ENCODE measurements at regions of chr1 and their contacts with region 1.

Region 1: DNA sequence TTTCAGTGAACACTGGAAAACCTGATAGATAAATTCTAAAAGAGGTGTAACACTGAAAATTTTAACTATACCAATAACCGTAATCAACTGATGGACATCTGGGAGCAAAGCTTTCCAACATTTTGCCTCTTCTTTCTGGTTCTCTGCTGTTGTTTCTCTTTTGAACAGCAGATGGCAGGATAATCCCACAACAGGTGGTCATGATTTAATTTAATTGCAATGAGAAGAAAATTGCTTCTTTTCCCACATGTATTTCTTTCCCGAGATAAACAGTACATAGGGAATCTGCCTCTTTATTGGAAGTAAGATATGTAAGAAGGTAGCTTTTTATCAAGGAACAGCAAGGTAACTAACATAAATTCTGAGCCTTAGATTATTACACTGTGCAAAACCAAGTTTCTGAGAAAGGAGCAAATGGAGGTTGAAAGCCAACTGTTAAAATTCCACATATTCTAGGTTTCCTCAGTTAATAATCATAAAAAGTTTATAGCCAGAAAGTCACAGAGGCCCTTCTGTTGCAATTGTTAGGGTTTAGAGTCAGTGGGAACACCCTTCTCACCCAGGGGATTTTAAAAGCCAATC is 72.9 kb downstream of the RPS6KA1 start:
- DNase-seq: no peak
- ATAC-seq: peak; percentile 64
- H3K4me3 ChIP-seq: no peak overlapping the region
- H3K27ac ChIP-seq: no peak overlapping the region
- H3K4me1 ChIP-seq: peaks cover 10% of the 10 kb centered on the region
- H3K27me3 ChIP-seq: no peaks in the 10 kb centered on the region
- CTCF ChIP-seq: peak; percentile 77 to 86 (median 79)
- EP300 ChIP-seq: no peak
- POLR2A ChIP-seq: no peak
- RAD21 ChIP-seq: peak; percentile 99

Region 2: DNA sequence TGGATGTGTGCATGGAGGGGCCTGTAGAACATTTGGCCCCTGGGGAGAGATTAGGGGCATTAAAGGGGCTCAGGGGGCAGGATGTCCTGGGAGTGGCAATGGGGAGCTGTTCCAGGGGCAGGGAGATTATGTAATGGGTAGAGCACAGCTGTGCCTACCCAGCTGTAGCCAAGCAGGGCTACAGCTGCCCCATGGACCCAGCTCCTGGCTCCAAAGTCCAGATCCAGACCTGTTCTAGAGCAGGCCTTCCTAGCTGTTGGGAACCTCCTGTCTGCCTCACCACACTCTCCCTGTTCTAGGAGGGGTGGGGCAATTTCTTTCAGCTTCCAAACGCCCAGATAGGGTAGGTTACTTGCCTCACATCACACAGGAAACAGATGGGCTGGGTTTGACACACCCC is 67.3 kb before region 1 on chr1:
- CTCF ChIA-PET with region 1: interaction called, 58 read pairs
- POLR2A ChIA-PET with region 1: interaction called, 3 read pairs
- RAD21 ChIA-PET with region 1: interaction called, 27 read pairs
- SMC1A ChIA-PET with region 1: interaction called, 53 read pairs
- in situ Hi-C with region 1: no loop called
- intact Hi-C with region 1: loop called (anchors 5 kb)
- DNase-seq: no peak
- ATAC-seq: no peak
- H3K4me3 ChIP-seq: no peak overlapping the region
- H3K27ac ChIP-seq: no peak overlapping the region
- H3K4me1 ChIP-seq: peaks cover 39% of the 10 kb centered on the region
- H3K27me3 ChIP-seq: no peaks in the 10 kb centered on the region
- CTCF ChIP-seq: no peak
- EP300 ChIP-seq: no peak
- POLR2A ChIP-seq: no peak
- RAD21 ChIP-seq: no peak

Region 3: DNA sequence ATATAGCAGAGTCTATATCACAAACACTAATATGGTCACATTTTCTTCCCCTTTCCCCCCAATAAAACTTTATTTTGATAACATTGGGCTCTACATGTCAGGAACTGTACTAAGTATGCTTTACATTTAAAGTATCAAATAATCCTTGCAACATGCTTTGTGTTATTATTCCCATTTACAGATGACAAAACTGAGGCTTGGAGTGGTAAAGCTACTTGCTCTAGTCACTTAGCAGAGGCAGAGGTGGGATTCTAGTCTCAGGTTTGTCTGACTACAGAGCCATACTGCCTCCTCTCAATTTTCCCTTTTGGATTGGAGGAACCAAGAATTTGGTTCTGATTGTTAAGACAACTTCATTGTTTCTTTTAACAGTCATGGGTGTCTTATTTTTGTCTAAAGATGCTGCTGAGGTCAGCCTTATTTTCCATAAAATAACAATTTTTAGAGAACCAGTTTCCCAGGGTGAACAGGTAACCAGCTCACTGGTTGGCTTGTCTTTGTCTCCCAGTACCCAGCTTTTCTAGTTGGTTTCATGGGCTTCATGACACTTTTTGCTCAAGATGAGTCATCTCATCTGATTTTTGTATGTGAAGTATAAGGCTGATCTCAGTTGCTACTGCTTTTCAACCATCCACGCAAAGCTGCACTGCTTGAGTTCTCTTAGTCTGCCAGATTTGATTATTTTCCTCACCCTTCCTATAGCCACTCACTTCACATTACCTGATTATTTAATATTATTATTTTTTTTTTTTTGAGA is 12.4 kb after region 1 on chr1:
- CTCF ChIA-PET with region 1: interaction called, 5 read pairs
- POLR2A ChIA-PET with region 1: interaction called, 4 read pairs
- RAD21 ChIA-PET with region 1: interaction called, 24 read pairs
- SMC1A ChIA-PET with region 1: interaction called, 11 read pairs
- in situ Hi-C with region 1: no loop called
- intact Hi-C with region 1: no loop called
- DNase-seq: no peak
- ATAC-seq: peak; percentile 46; the same call in 2 of the 3 replicates
- H3K4me3 ChIP-seq: no peak overlapping the region
- H3K27ac ChIP-seq: no peak overlapping the region
- H3K4me1 ChIP-seq: peaks cover 13% of the 10 kb centered on the region
- H3K27me3 ChIP-seq: no peaks in the 10 kb centered on the region
- CTCF ChIP-seq: no peak
- EP300 ChIP-seq: no peak
- POLR2A ChIP-seq: no peak
- RAD21 ChIP-seq: no peak

Region 4: DNA sequence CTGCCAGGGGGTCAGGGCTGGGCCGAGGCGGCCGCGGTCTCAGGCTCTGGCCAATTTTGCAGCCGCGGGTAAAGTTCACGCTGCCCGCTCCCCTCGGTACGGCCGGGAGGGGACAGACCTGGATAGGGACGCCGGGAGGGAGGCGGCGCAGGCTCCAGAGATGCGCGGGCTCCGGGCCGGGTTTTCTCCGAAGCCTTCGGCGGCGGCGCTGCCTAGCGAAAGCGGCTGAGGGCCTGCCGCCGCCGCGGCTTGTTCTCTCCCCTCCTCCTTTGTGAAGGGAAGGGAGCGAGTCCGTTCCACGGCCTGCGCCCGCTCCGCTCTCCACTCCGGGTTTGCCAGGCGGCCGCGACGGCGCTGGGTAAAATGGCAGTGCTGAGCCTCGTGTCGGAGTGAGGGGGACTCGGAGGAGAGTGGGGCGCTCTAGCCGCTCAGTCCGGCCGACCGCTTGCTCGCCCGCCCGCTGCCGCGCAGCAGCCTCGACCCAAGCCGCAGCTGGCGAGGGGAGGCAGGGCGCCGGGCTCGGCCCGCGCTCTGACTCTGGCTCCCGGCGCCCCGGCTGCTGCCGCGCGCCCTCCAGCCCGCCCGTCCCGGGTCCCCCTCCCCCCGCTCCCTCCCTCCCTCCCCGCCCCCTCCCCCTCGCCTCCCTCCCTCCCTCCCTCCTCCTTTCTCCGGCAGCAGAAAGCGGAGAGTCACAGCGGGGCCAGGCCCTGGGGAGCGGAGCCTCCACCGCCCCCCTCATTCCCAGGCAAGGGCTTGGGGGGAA is 93.1 kb after region 1 on chr1 and contains the start of gene ARID1A:
- CTCF ChIA-PET with region 1: interaction called, 11 read pairs
- POLR2A ChIA-PET with region 1: interaction called, 3 read pairs
- RAD21 ChIA-PET with region 1: interaction called, 5 read pairs
- SMC1A ChIA-PET with region 1: interaction called, 24 read pairs
- in situ Hi-C with region 1: no loop called
- intact Hi-C with region 1: no loop called
- DNase-seq: peak; percentile 82
- ATAC-seq: peak; percentile 69
- H3K4me3 ChIP-seq: peak within 1 kb of the TSS; percentile 98
- H3K27ac ChIP-seq: peak within 1 kb of the TSS; percentile 98
- H3K4me1 ChIP-seq: peaks cover 13% of the 10 kb centered on the region
- H3K27me3 ChIP-seq: no peaks in the 10 kb centered on the region
- CTCF ChIP-seq: no peak
- EP300 ChIP-seq: peak in 1 of 2 experiments; percentile 74; a peak in 1 of 4 replicates
- POLR2A ChIP-seq: peak; percentile 97
- RAD21 ChIP-seq: peak; percentile 27; the same call in 1 of the 2 replicates
- polyA plus RNA-seq, gene ARID1A: 10.0 to 24.5 TPM

Region 5: DNA sequence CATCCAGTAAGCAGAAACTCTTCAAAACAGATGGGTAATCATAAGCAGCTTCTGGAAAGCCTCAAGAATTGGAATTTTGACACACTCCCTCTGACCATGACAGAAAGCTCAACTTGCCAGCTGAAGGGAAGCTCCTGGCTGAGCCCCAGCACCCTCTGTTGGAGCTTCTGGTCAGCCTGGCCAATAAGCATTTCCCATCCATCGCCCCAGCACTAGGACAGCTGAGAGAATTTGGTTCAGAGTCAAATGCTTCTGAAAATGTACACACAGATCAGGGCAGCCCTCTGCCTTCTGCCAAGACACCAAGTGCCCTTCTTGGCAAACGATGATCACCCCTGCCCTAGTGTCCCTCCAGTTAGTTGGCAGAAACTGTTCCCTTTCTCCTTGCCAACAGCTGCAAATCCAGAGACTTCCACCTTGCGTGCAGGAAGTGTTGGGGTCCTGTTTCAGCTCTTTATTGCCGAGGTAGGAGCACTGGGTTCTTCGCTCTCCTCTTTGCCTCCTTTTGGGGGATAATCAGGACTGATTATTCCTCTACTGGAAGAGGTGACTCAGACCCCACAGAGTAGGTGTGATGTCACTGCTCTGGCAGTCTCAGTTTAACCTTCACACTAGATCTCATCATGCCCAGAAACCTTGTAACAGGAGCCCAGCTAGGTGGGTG is 197.1 kb after region 1 on chr1:
- CTCF ChIA-PET with region 1: interaction called, 24 read pairs
- POLR2A ChIA-PET with region 1: interaction called, 3 read pairs
- RAD21 ChIA-PET with region 1: no interaction called
- SMC1A ChIA-PET with region 1: interaction called, 13 read pairs
- in situ Hi-C with region 1: no loop called
- intact Hi-C with region 1: no loop called
- DNase-seq: no peak
- ATAC-seq: peak; percentile 53
- H3K4me3 ChIP-seq: no peak overlapping the region
- H3K27ac ChIP-seq: peak overlapping the region; percentile 0; the same call in 1 of the 2 replicates
- H3K4me1 ChIP-seq: peaks cover 11% of the 10 kb centered on the region
- H3K27me3 ChIP-seq: no peaks in the 10 kb centered on the region
- CTCF ChIP-seq: no peak
- EP300 ChIP-seq: no peak
- POLR2A ChIP-seq: no peak
- RAD21 ChIP-seq: no peak

Region 6: DNA sequence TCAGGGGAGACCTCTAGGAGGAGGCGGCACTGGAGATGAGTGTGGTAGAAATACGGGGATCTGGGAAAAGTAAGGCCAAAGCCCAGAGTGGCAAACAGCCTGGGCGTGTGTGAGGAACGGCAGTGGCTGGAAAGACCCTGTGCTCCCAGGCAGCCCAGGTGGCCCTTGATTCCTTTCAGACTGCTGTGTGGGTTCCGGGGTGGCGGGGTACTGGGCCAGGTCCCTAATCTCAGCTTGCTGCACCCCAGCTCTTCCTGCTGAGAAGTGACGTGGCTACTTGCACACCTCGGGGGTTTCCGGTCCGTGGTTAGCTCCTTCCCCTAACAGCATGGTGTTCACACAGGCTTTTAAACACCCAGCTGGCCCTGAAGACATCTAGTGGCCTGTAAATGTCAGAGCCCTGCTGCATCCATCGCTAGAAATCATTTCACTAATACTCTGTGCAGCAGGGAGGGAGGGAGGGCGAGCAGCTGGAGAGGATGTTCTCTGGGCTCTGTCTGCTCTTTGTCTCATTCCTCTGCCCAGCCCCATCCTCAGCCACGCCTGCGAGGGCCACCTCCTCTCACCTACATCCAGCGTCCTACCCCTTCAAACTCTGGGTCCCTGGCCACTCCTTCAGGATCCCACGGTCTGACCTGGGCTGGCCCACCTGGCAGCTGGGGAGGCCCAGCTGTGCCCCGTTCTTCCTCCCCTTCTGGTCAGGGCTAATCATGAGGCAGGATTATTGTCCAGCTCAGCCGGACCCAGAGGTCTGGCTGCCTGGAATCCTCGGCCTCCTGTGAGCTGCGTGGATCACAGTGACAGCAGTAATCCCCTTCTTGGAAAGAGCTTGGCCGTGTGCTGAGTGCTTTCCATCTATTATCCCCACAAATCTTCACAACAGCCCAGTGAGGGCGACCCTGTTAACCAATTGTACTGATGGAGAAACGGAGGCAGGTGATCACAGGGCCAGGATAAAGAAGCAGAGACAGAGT is 231.2 kb after region 1 on chr1:
- CTCF ChIA-PET with region 1: interaction called, 10 read pairs
- POLR2A ChIA-PET with region 1: no interaction called
- RAD21 ChIA-PET with region 1: interaction called, 10 read pairs
- SMC1A ChIA-PET with region 1: interaction called, 4 read pairs
- in situ Hi-C with region 1: no loop called
- intact Hi-C with region 1: no loop called
- DNase-seq: peak; percentile 88
- ATAC-seq: peak; percentile 88
- H3K4me3 ChIP-seq: peak overlapping the region; percentile 56; the same call in 1 of the 2 replicates
- H3K27ac ChIP-seq: peak overlapping the region; percentile 99
- H3K4me1 ChIP-seq: peaks cover 40% of the 10 kb centered on the region
- H3K27me3 ChIP-seq: no peaks in the 10 kb centered on the region
- CTCF ChIP-seq: peak; percentile 40 to 54 (median 46); a peak in 5 of 6 replicates
- EP300 ChIP-seq: no peak; a peak in 1 of 4 replicates
- POLR2A ChIP-seq: peak; percentile 84
- RAD21 ChIP-seq: peak; percentile 69

Measured in GM12878 (cell line).